ENCODE measurements at regions of chr6 and their contacts with region 1.

Region 1: GRCh38 chr6:12075067-12075563 is 63.0 kb downstream of the HIVEP1 start:
- DNase-seq: no peak
- H3K4me3 ChIP-seq: no peak overlapping the region
- H3K27ac ChIP-seq: no peak overlapping the region
- H3K4me1 ChIP-seq: peaks cover 0 to 4% (median 0%) of the 10 kb centered on the region in 4 donors
- H3K27me3 ChIP-seq: no peaks in the 10 kb centered on the region
- CTCF ChIP-seq: peak in 3 of 4 experiments; percentile 12 to 29 (median 18)
- EP300 ChIP-seq: no peak
- POLR2A ChIP-seq: no peak

Region 2: DNA sequence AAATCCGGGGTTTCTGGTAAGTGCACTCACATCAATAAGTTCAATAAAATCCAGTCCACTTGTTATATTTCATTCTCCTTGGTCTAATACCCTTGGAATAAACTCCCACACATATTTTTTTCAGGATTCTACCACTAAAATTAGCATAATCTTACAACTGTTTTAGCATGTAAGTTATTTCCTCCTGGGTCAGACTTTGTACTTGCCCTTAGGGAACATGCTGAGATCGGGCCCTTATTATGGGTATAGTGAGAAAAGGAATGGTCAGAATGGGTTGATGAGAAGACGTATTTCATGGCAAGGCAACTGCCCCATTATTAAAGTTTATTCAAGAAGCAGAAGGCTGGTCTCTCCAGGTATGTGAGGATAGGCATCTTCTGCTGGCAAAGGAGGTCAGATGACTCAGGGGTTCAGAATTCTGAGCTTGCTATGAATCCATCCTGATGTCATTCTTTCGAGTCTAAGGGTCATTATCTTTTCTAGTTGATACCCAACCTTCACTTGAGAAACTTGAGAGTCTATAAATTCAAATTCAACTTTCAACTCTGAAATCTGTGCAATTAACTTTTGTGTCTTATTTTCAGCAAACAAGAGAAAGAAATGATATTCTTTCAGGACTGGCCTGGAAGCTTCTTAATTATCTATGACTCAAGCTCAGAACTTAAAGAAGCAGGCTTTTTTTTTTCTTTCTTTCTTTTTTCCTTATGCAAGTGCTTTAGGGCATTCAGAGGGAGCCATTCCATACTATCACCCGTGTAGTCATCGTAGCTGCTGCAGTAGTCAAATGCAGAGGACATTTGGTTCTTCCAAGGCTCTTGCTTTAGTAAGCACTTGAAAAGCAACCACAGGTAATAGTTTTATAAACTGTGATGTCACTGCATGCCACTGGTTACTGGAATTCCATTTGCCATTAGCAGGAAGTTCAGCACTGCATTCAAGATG is 389.7 kb before region 1 on chr6:
- intact Hi-C with region 1: loop called (anchors 10 kb)
- DNase-seq: no peak
- H3K4me3 ChIP-seq: no peak overlapping the region
- H3K27ac ChIP-seq: no peak overlapping the region
- H3K4me1 ChIP-seq: peaks cover 0 to 4% (median 0%) of the 10 kb centered on the region in 4 donors
- H3K27me3 ChIP-seq: no peaks in the 10 kb centered on the region
- CTCF ChIP-seq: no peak
- EP300 ChIP-seq: no peak
- POLR2A ChIP-seq: no peak